Activated T-helper 2 cell treated with anti-CD3 and anti-CD28 coated beads, Interferon-gamma antibody, Interleukin-2, Interleukin-4, amounts not matched to agents 10 μg/mL and 5 μg/mL and 100 μg/mL, durations not matched to agents 14 hours and 24 hours and 36 hours (primary cell): ENCODE measurements at regions of chr11 and their contacts with region 1.

Region 1: GRCh38 chr11:115919341-115920091 is 415.3 kb upstream of the CADM1 start:
- DNase-seq: peak; percentile 10
- H3K4me3 Mint-ChIP-seq: peak overlapping the region; percentile 53
- H3K27ac Mint-ChIP-seq: peak overlapping the region; percentile 97
- H3K4me1 Mint-ChIP-seq: peaks cover 46% of the 10 kb centered on the region
- H3K27me3 Mint-ChIP-seq: no peaks in the 10 kb centered on the region

Region 2: DNA sequence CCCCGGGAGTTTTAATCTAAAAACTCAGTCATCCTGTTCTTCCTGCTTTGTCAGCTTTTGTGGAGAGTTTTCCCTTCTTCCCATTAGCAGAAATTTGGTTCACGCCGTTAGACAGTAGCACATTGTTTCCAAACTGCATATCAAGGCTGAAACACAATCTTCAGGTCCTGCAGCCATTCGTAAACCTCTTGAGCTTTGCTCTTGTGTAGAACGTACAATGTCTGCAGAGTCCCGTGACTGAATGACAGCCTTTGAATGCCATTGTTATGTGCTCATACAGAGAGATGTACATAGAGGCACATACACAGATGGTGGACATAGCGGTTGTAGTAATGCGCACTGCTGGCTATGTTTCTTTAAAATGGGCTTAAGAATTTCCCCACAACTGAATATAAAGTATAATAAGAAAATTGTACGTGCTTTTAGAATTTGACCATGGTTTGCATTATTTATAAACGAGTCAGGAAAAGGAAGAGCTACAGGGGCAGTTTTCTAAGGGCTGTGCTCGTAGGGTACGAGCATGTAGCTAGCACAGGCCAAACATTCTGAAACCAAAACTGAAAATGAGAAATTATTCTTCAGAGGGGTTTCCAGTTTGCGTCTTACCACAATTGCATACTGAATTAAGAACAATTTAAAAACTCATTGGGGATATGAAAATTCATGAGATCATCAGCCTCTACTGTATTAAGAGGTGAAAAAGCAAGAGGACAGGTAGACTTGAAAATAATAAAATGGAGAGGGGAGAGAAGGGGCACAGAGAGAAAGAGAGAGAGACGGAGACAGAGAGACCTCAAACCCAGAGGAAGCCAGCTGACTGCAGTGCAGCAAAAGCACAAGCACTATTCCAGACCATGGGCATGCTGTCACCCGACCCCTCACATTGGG is 725.4 kb before region 1 on chr11:
- intact Hi-C with region 1: loop called (anchors 10 kb)
- DNase-seq: no peak
- H3K4me3 Mint-ChIP-seq: peak overlapping the region; percentile 42
- H3K27ac Mint-ChIP-seq: peak overlapping the region; percentile 86
- H3K4me1 Mint-ChIP-seq: peaks cover 26% of the 10 kb centered on the region
- H3K27me3 Mint-ChIP-seq: peaks cover 15% of the 10 kb centered on the region

Region 3: DNA sequence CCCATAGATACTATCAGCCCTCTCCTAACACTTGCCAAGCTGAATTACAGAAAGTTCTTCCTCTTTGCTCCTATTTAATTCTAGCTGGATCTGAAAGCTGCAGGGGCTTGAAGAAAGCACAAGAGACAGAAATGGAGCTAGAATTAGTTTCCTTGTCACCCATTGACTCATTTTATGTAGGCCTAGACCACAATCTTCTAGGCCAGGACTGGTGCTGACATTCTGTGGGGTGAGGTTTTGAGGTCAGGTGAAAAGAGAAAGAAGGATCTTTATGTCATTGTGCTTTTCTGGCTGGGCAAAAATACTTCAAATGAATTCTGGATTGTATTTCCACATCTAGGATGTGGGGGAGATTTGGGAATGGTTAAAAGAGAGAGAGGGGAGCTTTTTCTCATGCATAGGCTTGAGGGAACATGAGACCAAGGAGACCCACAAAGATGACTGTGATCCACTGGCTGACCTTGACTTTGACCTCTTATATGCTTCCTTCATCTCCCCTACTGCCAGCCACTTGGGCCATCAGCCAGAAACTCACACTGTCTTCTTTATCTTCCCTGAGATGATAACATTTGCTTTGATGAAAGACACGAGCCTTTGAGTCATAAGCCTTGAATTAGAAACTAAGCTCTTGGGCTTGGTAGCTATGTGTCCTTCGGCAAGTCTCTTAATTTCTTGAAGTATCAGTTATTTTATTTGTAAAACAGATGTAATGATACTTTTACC is 140.4 kb before region 1 on chr11:
- intact Hi-C with region 1: loop called (anchors 5 kb)
- DNase-seq: no peak
- H3K4me3 Mint-ChIP-seq: no peak overlapping the region
- H3K27ac Mint-ChIP-seq: peak overlapping the region; percentile 38
- H3K4me1 Mint-ChIP-seq: peaks cover 3% of the 10 kb centered on the region
- H3K27me3 Mint-ChIP-seq: no peaks in the 10 kb centered on the region

Region 4: DNA sequence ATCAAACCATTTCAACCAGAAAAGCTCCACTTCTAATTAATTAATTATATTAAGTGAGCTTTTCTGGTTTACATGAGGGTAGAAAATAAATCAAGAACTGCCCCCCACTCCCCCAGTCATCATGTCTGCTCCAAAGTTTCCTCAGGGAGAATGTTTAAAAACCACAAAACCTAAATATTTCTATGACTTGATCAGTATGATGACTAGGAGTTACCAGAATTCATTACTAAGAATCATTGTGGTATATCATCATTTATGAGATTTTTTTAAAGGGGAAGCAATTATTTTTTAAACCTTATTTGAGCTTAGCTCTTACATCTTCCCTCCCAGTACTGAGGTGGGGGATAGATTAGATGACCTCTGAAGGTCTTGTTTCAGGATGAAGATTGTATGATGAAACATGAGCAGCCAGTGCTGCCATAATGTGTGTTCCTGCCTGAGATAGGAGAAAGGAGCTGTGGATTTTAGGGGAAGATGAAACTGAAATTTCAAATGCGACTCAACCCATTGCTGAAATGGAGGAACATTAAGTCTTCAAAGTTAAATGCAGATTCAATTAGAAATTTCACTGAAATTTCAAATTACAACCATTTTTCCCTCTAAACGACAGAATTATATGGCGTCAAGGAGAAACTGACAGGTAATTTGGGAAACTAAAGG is 14.0 kb before region 1 on chr11:
- intact Hi-C with region 1: loop called (anchors 1 kb)
- DNase-seq: no peak
- H3K4me3 Mint-ChIP-seq: no peak overlapping the region
- H3K27ac Mint-ChIP-seq: peak overlapping the region; percentile 65
- H3K4me1 Mint-ChIP-seq: peaks cover 22% of the 10 kb centered on the region
- H3K27me3 Mint-ChIP-seq: no peaks in the 10 kb centered on the region